ENCODE measurements at regions of chr5 and their contacts with region 1.

Region 1: GRCh38 chr5:35672995-35673394 is 55.3 kb downstream of the SPEF2 start:
- DNase-seq: peak in 6 of 9 experiments; percentile 15 to 68 (median 37)
- ATAC-seq: peak; percentile 73
- H3K4me3 ChIP-seq: peak overlapping the region in 1 of 2 experiments; percentile 6
- H3K4me3 Mint-ChIP-seq: peak overlapping the region; percentile 35
- H3K27ac ChIP-seq: peak overlapping the region; percentile 23 to 56
- H3K27ac Mint-ChIP-seq: peak overlapping the region; percentile 91
- H3K4me1 ChIP-seq: peaks cover 56% of the 10 kb centered on the region
- H3K4me1 Mint-ChIP-seq: peaks cover 63% of the 10 kb centered on the region
- H3K27me3 ChIP-seq: no peaks in the 10 kb centered on the region
- H3K27me3 Mint-ChIP-seq: no peaks in the 10 kb centered on the region
- CTCF ChIP-seq: no peak

Region 2: GRCh38 chr5:35657877-35658276 is 15.1 kb before region 1 on chr5:
- CTCF ChIA-PET with region 1: interaction called, 10 read pairs
- POLR2A ChIA-PET with region 1: interaction called, 6 read pairs
- intact Hi-C with region 1: loop called in 1 of 2 experiments (anchors 1 kb)
- DNase-seq: peak in 2 of 9 experiments; percentile 22 to 35
- ATAC-seq: peak; percentile 55
- H3K4me3 ChIP-seq: no peak overlapping the region
- H3K4me3 Mint-ChIP-seq: no peak overlapping the region
- H3K27ac ChIP-seq: no peak overlapping the region
- H3K27ac Mint-ChIP-seq: peak overlapping the region; percentile 29
- H3K4me1 ChIP-seq: no peaks in the 10 kb centered on the region
- H3K4me1 Mint-ChIP-seq: peaks cover 20% of the 10 kb centered on the region
- H3K27me3 ChIP-seq: no peaks in the 10 kb centered on the region
- H3K27me3 Mint-ChIP-seq: no peaks in the 10 kb centered on the region
- CTCF ChIP-seq: no peak

Region 3: DNA sequence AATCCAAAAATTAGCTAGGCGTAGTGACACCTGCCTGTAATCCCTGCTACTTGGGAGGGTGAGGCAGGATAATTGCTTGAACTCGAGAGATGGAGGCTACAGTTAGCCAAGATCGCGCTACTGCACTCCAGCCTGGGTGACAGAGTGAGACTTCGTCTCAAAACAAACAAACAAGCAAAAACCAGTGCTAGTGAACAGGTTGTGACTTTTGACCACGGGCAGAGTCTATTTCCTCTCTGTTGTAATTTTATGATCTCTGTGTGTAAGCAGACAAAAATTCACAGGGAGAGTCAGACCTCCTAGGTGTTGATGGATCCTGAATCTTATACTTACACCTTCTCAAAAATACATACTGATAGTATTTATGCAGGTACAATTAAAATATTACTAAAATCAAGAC is 10.5 kb after region 1 on chr5:
- CTCF ChIA-PET with region 1: no interaction called
- POLR2A ChIA-PET with region 1: no interaction called
- intact Hi-C with region 1: no loop called
- DNase-seq: no peak
- ATAC-seq: no peak
- H3K4me3 ChIP-seq: no peak overlapping the region
- H3K4me3 Mint-ChIP-seq: no peak overlapping the region
- H3K27ac ChIP-seq: no peak overlapping the region
- H3K27ac Mint-ChIP-seq: no peak overlapping the region
- H3K4me1 ChIP-seq: peaks cover 13% of the 10 kb centered on the region
- H3K4me1 Mint-ChIP-seq: peaks cover 12% of the 10 kb centered on the region
- H3K27me3 ChIP-seq: no peaks in the 10 kb centered on the region
- H3K27me3 Mint-ChIP-seq: no peaks in the 10 kb centered on the region
- CTCF ChIP-seq: no peak

Region 4: DNA sequence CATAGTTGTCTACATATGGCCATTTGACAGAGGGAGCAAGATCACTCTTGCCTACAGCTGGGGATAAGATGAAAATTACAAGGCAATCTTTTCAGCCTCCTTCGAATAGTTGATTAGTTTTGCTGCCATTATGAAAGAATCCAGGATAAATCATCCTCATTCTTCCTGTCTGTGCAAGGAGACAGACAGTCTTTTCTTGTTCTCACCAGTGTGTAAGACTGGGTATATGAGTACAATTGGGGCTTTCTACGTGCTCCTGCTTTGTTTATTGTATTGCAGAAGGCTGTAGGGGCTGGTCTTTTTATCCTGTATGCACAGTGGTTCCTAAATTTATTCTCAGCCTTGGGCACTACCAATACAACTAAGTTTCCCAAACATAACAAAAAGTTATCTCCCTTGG is 21.5 kb after region 1 on chr5:
- CTCF ChIA-PET with region 1: no interaction called
- POLR2A ChIA-PET with region 1: no interaction called
- intact Hi-C with region 1: no loop called
- DNase-seq: no peak
- ATAC-seq: no peak
- H3K4me3 ChIP-seq: no peak overlapping the region
- H3K4me3 Mint-ChIP-seq: no peak overlapping the region
- H3K27ac ChIP-seq: no peak overlapping the region
- H3K27ac Mint-ChIP-seq: no peak overlapping the region
- H3K4me1 ChIP-seq: no peaks in the 10 kb centered on the region
- H3K4me1 Mint-ChIP-seq: no peaks in the 10 kb centered on the region
- H3K27me3 ChIP-seq: no peaks in the 10 kb centered on the region
- H3K27me3 Mint-ChIP-seq: no peaks in the 10 kb centered on the region
- CTCF ChIP-seq: no peak

Region 5: GRCh38 chr5:35707659-35708058 is 34.7 kb after region 1 on chr5:
- CTCF ChIA-PET with region 1: no interaction called
- POLR2A ChIA-PET with region 1: no interaction called
- intact Hi-C with region 1: loop called in 1 of 2 experiments (anchors 5 kb)
- DNase-seq: peak in 2 of 9 experiments; percentile 4 to 21
- ATAC-seq: peak; percentile 20
- H3K4me3 ChIP-seq: no peak overlapping the region
- H3K4me3 Mint-ChIP-seq: no peak overlapping the region
- H3K27ac ChIP-seq: no peak overlapping the region
- H3K27ac Mint-ChIP-seq: peak overlapping the region; percentile 18
- H3K4me1 ChIP-seq: no peaks in the 10 kb centered on the region
- H3K4me1 Mint-ChIP-seq: peaks cover 18% of the 10 kb centered on the region
- H3K27me3 ChIP-seq: no peaks in the 10 kb centered on the region
- H3K27me3 Mint-ChIP-seq: no peaks in the 10 kb centered on the region
- CTCF ChIP-seq: no peak

Region 6: GRCh38 chr5:35771309-35771708 is 98.3 kb after region 1 on chr5:
- CTCF ChIA-PET with region 1: no interaction called
- POLR2A ChIA-PET with region 1: no interaction called
- intact Hi-C with region 1: loop called in 1 of 2 experiments (anchors 5 kb)
- DNase-seq: no peak
- ATAC-seq: no peak
- H3K4me3 ChIP-seq: no peak overlapping the region
- H3K4me3 Mint-ChIP-seq: no peak overlapping the region
- H3K27ac ChIP-seq: no peak overlapping the region
- H3K27ac Mint-ChIP-seq: peak overlapping the region; percentile 77
- H3K4me1 ChIP-seq: peaks cover 23% of the 10 kb centered on the region
- H3K4me1 Mint-ChIP-seq: peaks cover 48% of the 10 kb centered on the region
- H3K27me3 ChIP-seq: no peaks in the 10 kb centered on the region
- H3K27me3 Mint-ChIP-seq: no peaks in the 10 kb centered on the region
- CTCF ChIP-seq: no peak

Region 7: DNA sequence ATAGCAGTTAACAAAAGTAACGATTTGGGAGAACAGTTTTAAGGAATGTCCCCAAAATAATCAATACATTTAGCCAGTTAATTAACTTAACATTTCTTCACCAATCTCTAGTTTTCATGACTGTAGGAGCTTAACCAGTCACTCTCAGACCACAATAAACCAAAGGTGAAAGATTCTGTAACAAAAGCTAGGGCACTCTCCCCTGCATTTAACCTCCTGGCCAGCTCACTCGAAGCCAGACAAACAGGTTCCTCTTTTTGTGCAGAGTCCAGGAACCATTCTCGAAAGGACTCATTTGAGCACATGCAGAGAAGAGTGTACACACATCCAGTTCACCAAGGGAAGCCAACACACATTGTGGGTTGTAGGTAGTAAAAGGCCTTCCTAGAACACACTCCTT is 190.2 kb after region 1 on chr5:
- CTCF ChIA-PET with region 1: interaction called, 4 read pairs
- POLR2A ChIA-PET with region 1: interaction called, 5 read pairs
- intact Hi-C with region 1: loop called in 1 of 2 experiments (anchors 5 kb)
- DNase-seq: peak in 1 of 9 experiments; percentile 22
- ATAC-seq: no peak
- H3K4me3 ChIP-seq: peak overlapping the region; percentile 66 to 80
- H3K4me3 Mint-ChIP-seq: peak overlapping the region; percentile 91
- H3K27ac ChIP-seq: peak overlapping the region; percentile 59 to 97
- H3K27ac Mint-ChIP-seq: peak overlapping the region; percentile 96
- H3K4me1 ChIP-seq: peaks cover 52% of the 10 kb centered on the region
- H3K4me1 Mint-ChIP-seq: peaks cover 76% of the 10 kb centered on the region
- H3K27me3 ChIP-seq: no peaks in the 10 kb centered on the region
- H3K27me3 Mint-ChIP-seq: no peaks in the 10 kb centered on the region
- CTCF ChIP-seq: no peak